Naive thymus-derived CD4-positive, alpha-beta T cell (primary cell): ENCODE measurements at regions of chr17 and their contacts with region 1.

Region 1: GRCh38 chr17:32783602-32784001 is 93.3 kb downstream of the MYO1D start:
- DNase-seq: peak in 7 of 9 donors; percentile 15 to 60 (median 43)
- ATAC-seq: peak; percentile 79
- H3K4me3 ChIP-seq: no peak overlapping the region
- H3K4me3 Mint-ChIP-seq: no peak overlapping the region
- H3K27ac ChIP-seq: no peak overlapping the region
- H3K27ac Mint-ChIP-seq: no peak overlapping the region
- H3K4me1 ChIP-seq: no peaks in the 10 kb centered on the region
- H3K4me1 Mint-ChIP-seq: no peaks in the 10 kb centered on the region
- H3K27me3 ChIP-seq: no peaks in the 10 kb centered on the region
- H3K27me3 Mint-ChIP-seq: peaks cover 0 to 13% (median 0%) of the 10 kb centered on the region in 5 donors

Region 2: DNA sequence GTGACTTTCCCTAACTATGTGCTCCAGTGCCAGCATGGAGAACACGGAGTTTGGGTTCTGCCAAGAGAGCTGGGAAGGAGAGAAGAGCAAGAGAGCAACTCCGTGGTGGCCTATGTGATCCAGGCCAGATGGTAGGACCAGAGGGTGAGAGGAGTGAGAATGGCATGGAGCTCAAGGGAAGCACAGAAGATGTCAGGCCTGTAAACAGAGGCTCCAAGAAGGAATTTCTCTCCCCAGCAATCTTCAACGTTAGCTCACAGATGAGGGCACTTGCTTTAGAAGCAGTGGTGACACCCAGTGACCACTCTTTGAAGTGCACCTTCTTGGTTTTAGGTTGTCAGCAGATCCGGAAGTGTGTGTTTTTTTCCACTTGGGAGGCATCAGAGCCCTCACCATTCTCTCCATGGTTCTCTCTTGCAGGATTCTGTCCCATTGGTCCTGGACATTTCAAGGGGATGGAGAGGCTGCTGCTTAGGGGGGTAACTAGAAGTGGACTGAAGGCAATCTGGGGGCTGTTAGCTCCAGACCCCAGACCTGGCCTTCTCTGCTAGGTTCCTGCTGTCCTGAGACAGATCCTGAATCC is 126.3 kb after region 1 on chr17:
- CTCF ChIA-PET with region 1: interaction called, 6 read pairs
- POLR2A ChIA-PET with region 1: no interaction called
- intact Hi-C with region 1: loop called in 1 of 2 experiments (anchors 1 kb)
- DNase-seq: peak in 3 of 9 donors; percentile 11 to 46 (median 19)
- ATAC-seq: peak; percentile 70
- H3K4me3 ChIP-seq: no peak overlapping the region
- H3K4me3 Mint-ChIP-seq: no peak overlapping the region
- H3K27ac ChIP-seq: no peak overlapping the region
- H3K27ac Mint-ChIP-seq: no peak overlapping the region
- H3K4me1 ChIP-seq: no peaks in the 10 kb centered on the region
- H3K4me1 Mint-ChIP-seq: peaks cover 0 to 9% (median 0%) of the 10 kb centered on the region in 7 donors
- H3K27me3 ChIP-seq: no peaks in the 10 kb centered on the region
- H3K27me3 Mint-ChIP-seq: peaks cover 12 to 26% (median 22%) of the 10 kb centered on the region in 5 donors

Region 3: GRCh38 chr17:32936894-32937500 is 153.4 kb after region 1 on chr17:
- CTCF ChIA-PET with region 1: interaction called, 28 read pairs
- POLR2A ChIA-PET with region 1: no interaction called
- intact Hi-C with region 1: loop called (anchors 1 to 2 kb)
- DNase-seq: peak; percentile 25 to 64 (median 48)
- ATAC-seq: peak; percentile 77
- H3K4me3 ChIP-seq: no peak overlapping the region
- H3K4me3 Mint-ChIP-seq: peak overlapping the region in 5 of 10 donors; percentile 14 to 60 (median 37)
- H3K27ac ChIP-seq: no peak overlapping the region
- H3K27ac Mint-ChIP-seq: no peak overlapping the region
- H3K4me1 ChIP-seq: no peaks in the 10 kb centered on the region
- H3K4me1 Mint-ChIP-seq: peaks cover 0 to 5% (median 0%) of the 10 kb centered on the region in 7 donors
- H3K27me3 ChIP-seq: peaks cover 0 to 3% of the 10 kb centered on the region in 2 donors
- H3K27me3 Mint-ChIP-seq: peaks cover 14 to 31% (median 27%) of the 10 kb centered on the region in 5 donors

Region 4: DNA sequence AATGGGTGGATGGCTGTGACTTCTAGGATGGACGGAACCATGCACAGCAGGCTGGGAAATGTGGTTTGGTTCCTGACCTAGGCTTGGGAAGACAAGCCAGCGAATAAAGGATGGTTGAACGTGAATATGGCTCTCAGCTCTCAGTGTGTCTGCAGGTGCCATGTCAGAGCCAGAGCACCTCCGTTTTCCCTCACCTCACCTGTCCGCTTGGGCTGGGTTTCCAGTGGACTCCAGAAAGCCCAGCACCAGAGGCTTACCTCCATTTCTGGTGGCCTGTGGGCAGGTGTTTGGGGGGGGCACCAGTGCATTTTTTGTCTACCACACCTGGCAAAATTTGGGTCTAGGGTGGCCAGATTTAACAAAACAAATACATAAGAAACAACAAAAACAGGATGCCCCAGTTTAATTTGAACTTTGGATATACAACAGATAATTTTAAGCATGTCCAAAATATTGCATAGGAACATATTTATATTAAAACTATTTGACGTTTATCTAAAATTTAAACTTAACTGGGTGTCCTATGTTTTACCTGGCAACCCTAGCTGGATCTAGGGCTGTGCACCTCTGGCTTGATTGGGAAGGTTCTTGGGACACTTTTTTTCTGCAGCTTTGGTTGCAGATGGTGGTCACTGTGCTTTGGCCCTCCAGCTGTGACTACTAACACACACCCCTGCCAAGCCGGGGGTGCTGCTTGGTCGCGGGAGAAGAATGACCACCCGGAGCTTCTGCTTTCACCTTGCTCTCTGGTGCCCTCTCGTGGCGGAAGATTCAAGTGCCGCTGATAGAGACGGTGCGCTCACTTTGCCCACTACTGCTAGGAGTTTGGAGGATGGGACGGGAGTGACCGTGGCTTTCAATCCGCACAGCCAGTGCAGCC is 214.4 kb after region 1 on chr17:
- CTCF ChIA-PET with region 1: interaction called, 10 read pairs
- POLR2A ChIA-PET with region 1: no interaction called
- intact Hi-C with region 1: loop called (anchors 1 to 2 kb)
- DNase-seq: peak; percentile 11 to 76 (median 54)
- ATAC-seq: peak; percentile 69
- H3K4me3 ChIP-seq: no peak overlapping the region
- H3K4me3 Mint-ChIP-seq: peak overlapping the region in 2 of 10 donors; percentile 36 to 69
- H3K27ac ChIP-seq: no peak overlapping the region
- H3K27ac Mint-ChIP-seq: peak overlapping the region in 1 of 9 donors; percentile 80
- H3K4me1 ChIP-seq: no peaks in the 10 kb centered on the region
- H3K4me1 Mint-ChIP-seq: peaks cover 0 to 5% (median 5%) of the 10 kb centered on the region in 7 donors
- H3K27me3 ChIP-seq: no peaks in the 10 kb centered on the region
- H3K27me3 Mint-ChIP-seq: peaks cover 4 to 25% (median 15%) of the 10 kb centered on the region in 5 donors